Activated CD4-positive, alpha-beta T cell treated with anti-CD3 and anti-CD28 coated beads, Interleukin-2, amount 10 ng/mL, durations not matched to agents 24 days and 14 days (primary cell): ENCODE measurements at regions of chr3 and their contacts with region 1.

Region 1: GRCh38 chr3:141380987-141381386 is 12.7 kb downstream of the ZBTB38 start:
- DNase-seq: no peak
- H3K4me3 Mint-ChIP-seq: no peak overlapping the region
- H3K27ac Mint-ChIP-seq: no peak overlapping the region
- H3K4me1 Mint-ChIP-seq: peaks cover 8% of the 10 kb centered on the region
- H3K27me3 Mint-ChIP-seq: peaks cover 9% of the 10 kb centered on the region

Region 2: DNA sequence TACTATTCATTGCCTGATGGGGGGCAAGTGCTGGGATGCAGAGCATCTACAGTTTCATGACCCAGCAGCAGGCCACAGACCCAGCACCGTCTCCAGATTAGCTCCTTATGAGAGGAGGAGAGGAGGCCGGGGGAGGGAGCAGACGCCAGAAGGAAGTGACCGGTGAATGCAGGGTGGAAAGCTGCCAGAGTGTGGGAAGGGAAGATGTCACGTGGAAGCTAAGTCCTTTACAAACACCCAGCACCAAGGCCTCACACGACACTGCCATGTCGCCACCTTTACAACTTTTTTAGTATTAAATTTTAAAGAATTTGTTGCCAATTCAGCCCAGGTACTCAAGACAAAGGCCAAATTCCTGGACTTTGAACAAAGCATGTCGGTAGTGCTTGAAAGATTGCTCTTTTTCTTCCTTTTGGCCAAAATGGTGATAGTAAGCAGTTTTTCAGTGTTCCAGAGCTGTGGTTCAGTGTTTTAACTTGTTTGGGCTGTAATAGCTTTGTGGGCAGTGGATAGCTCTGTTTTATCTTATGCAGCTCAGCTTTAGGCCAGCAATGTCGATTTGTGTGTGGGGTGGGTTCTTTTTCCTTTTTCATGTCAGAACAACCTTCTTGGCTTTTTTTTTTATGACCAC is 45.5 kb after region 1 on chr3:
- intact Hi-C with region 1: loop called (anchors 5 kb)
- DNase-seq: no peak
- H3K4me3 Mint-ChIP-seq: no peak overlapping the region
- H3K27ac Mint-ChIP-seq: no peak overlapping the region
- H3K4me1 Mint-ChIP-seq: peaks cover 9% of the 10 kb centered on the region
- H3K27me3 Mint-ChIP-seq: no peaks in the 10 kb centered on the region